ENCODE measurements at regions of chrX and their contacts with region 1.

Region 1: DNA sequence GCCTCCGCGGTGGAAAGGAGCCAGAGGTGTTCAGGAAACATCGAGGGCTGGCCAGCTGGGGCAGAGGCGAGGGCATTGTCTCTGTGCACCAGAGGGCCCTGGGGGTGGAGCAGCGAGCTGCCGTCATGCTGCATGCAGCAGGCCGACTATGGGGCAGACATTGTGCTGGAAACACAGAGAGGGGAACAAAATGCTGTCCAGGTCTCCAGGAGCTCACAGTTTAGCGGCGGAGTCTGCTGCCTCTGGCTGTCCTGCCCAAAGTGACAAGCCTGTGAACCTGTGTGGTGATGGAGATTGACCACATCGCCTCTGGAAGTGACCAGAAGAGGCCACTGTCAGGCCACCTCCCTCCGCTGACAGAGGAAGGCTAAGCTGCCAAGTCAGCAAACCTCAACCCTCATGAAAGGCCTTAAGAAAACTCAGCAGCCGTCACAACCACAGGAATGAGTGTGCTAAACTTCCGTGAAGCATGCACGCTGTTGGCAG is 20.1 kb upstream of the SASH3 start:
- DNase-seq: peak; percentile 68
- H3K4me3 Mint-ChIP-seq: peak overlapping the region; percentile 23
- H3K27ac Mint-ChIP-seq: peak overlapping the region; percentile 89
- H3K4me1 Mint-ChIP-seq: peaks cover 70% of the 10 kb centered on the region
- H3K27me3 Mint-ChIP-seq: no peaks in the 10 kb centered on the region

Region 2: DNA sequence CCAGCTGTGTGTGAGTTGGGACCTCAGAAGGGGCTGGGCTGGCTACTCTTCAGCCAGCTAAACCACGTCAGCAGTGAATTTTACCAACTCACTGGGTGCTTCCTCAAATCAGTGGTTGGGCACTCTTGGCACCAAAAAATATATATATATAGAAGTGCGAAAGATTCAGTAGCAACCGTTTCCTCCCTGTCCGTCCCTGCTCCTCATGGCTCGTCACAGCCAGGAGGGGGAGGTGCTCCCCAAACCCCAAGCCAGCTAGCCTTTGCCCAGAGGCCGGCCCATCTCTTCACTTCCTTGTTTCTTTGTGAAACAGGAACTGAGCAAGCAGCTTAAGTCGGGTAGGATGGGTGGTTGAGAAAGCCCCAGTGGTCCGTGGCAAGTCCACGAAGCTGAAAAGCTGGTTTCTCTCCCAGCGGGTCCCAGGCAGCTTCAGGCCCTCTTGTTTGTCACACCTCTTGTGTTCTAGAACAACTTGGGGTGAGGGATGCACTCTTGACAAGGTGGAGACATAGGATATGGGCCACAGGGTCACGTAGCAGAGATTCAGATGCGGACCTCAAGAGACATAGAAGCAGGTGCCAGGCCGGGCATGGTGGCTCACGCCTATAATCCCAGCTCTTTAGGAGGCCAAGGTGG is 13.3 kb after region 1 on chrX:
- CTCF ChIA-PET with region 1: interaction called, 22 read pairs
- DNase-seq: peak; percentile 62
- H3K4me3 Mint-ChIP-seq: no peak overlapping the region
- H3K27ac Mint-ChIP-seq: peak overlapping the region; percentile 93
- H3K4me1 Mint-ChIP-seq: peaks cover 87% of the 10 kb centered on the region
- H3K27me3 Mint-ChIP-seq: no peaks in the 10 kb centered on the region

Region 3: GRCh38 chrX:129781134-129781672 is 21.6 kb after region 1 on chrX:
- CTCF ChIA-PET with region 1: interaction called, 39 read pairs
- DNase-seq: peak; percentile 89
- H3K4me3 Mint-ChIP-seq: peak overlapping the region; percentile 94
- H3K27ac Mint-ChIP-seq: peak overlapping the region; percentile 94
- H3K4me1 Mint-ChIP-seq: peaks cover 72% of the 10 kb centered on the region
- H3K27me3 Mint-ChIP-seq: no peaks in the 10 kb centered on the region

Region 4: GRCh38 chrX:129823115-129823514 is 63.5 kb after region 1 on chrX:
- CTCF ChIA-PET with region 1: interaction called, 28 read pairs
- DNase-seq: peak; percentile 65
- H3K4me3 Mint-ChIP-seq: no peak overlapping the region
- H3K27ac Mint-ChIP-seq: no peak overlapping the region
- H3K4me1 Mint-ChIP-seq: peaks cover 21% of the 10 kb centered on the region
- H3K27me3 Mint-ChIP-seq: no peaks in the 10 kb centered on the region

Region 5: GRCh38 chrX:129996120-129996519 is 236.5 kb after region 1 on chrX:
- CTCF ChIA-PET with region 1: no interaction called
- DNase-seq: no peak
- H3K4me3 Mint-ChIP-seq: no peak overlapping the region
- H3K27ac Mint-ChIP-seq: no peak overlapping the region
- H3K4me1 Mint-ChIP-seq: no peaks in the 10 kb centered on the region
- H3K27me3 Mint-ChIP-seq: no peaks in the 10 kb centered on the region